ENCODE measurements at regions of chr2 and their contacts with region 1.

Region 1: DNA sequence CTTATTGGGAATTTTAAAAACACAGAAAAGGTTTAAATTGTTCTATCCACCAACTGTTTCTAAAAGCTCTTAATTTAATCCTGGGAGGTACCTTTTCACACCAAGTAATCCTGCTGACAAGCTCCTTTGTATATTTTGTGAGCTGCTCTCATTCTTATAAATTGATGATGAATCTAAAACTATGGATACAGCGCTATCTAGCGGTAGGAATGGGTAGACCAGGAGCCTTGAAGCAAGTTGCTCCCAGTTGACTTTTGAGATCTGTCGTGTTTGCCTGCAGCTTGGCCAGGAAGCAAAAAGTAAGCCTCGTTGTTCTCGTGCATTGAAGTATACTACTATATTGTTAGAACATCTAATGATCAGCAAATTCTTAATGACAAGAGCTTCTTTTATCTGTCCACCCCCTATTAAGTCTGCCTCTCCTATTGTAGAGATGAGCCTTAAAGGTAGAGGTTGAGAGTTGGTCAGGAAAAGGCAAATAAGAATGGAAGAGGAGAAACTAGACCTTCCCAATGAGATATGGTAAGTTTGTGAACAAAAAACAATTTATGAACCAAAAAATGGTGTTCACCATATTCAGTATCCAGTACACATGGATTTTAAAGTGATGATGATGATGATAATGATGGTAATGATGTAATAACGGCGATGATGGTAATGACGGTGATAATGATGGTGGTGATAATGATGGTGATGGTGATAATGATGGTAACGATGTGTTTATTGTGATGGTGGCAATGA is 212.0 kb upstream of the NCKAP5 start:
- DNase-seq: peak; percentile 93
- H3K4me3 ChIP-seq: no peak overlapping the region
- H3K27ac ChIP-seq: peak overlapping the region; percentile 8
- H3K4me1 ChIP-seq: peaks cover 20% of the 10 kb centered on the region
- H3K27me3 ChIP-seq: no peaks in the 10 kb centered on the region
- CTCF ChIP-seq: peak; percentile 93

Region 2: GRCh38 chr2:132670496-132671150 is 1109.6 kb before region 1 on chr2:
- CTCF ChIA-PET with region 1: no interaction called
- POLR2A ChIA-PET with region 1: no interaction called
- intact Hi-C with region 1: loop called (anchors 5 kb)
- DNase-seq: peak; percentile 55
- H3K4me3 ChIP-seq: peak overlapping the region; percentile 68
- H3K27ac ChIP-seq: peak overlapping the region; percentile 21
- H3K4me1 ChIP-seq: peaks cover 38% of the 10 kb centered on the region
- H3K27me3 ChIP-seq: no peaks in the 10 kb centered on the region
- CTCF ChIP-seq: no peak

Region 3: GRCh38 chr2:133171393-133172004 is 608.8 kb before region 1 on chr2:
- CTCF ChIA-PET with region 1: no interaction called
- POLR2A ChIA-PET with region 1: no interaction called
- intact Hi-C with region 1: loop called (anchors 5 kb)
- DNase-seq: peak; percentile 89
- H3K4me3 ChIP-seq: no peak overlapping the region
- H3K27ac ChIP-seq: no peak overlapping the region
- H3K4me1 ChIP-seq: peaks cover 60% of the 10 kb centered on the region
- H3K27me3 ChIP-seq: no peaks in the 10 kb centered on the region
- CTCF ChIP-seq: peak; percentile 83

Region 4: GRCh38 chr2:133362061-133362476 is 418.2 kb before region 1 on chr2:
- CTCF ChIA-PET with region 1: no interaction called
- POLR2A ChIA-PET with region 1: no interaction called
- intact Hi-C with region 1: loop called (anchors 10 kb)
- DNase-seq: peak; percentile 98
- H3K4me3 ChIP-seq: no peak overlapping the region
- H3K27ac ChIP-seq: peak overlapping the region; percentile 75
- H3K4me1 ChIP-seq: peaks cover 47% of the 10 kb centered on the region
- H3K27me3 ChIP-seq: no peaks in the 10 kb centered on the region
- CTCF ChIP-seq: no peak

Region 5: GRCh38 chr2:133526530-133527300 is 253.6 kb before region 1 on chr2:
- CTCF ChIA-PET with region 1: interaction called, 4 read pairs
- POLR2A ChIA-PET with region 1: interaction called, 4 read pairs
- intact Hi-C with region 1: loop called (anchors 1 kb)
- DNase-seq: peak; percentile 92
- H3K4me3 ChIP-seq: no peak overlapping the region
- H3K27ac ChIP-seq: peak overlapping the region; percentile 98
- H3K4me1 ChIP-seq: peaks cover 73% of the 10 kb centered on the region
- H3K27me3 ChIP-seq: no peaks in the 10 kb centered on the region
- CTCF ChIP-seq: no peak

Region 6: GRCh38 chr2:133568172-133568571 is 212.1 kb before region 1 on chr2 and contains the start of gene NCKAP5:
- CTCF ChIA-PET with region 1: interaction called, 7 read pairs
- POLR2A ChIA-PET with region 1: no interaction called
- intact Hi-C with region 1: loop called (anchors 2 kb)
- DNase-seq: peak; percentile 82
- H3K4me3 ChIP-seq: peak within 1 kb of the TSS; percentile 53
- H3K27ac ChIP-seq: peak within 1 kb of the TSS; percentile 71
- H3K4me1 ChIP-seq: peaks cover 26% of the 10 kb centered on the region
- H3K27me3 ChIP-seq: no peaks in the 10 kb centered on the region
- CTCF ChIP-seq: no peak
- total RNA-seq, gene NCKAP5: 26.6 and 33.1 TPM in 2 replicates